ENCODE measurements at regions of chr12 and their contacts with region 1.

Region 1: DNA sequence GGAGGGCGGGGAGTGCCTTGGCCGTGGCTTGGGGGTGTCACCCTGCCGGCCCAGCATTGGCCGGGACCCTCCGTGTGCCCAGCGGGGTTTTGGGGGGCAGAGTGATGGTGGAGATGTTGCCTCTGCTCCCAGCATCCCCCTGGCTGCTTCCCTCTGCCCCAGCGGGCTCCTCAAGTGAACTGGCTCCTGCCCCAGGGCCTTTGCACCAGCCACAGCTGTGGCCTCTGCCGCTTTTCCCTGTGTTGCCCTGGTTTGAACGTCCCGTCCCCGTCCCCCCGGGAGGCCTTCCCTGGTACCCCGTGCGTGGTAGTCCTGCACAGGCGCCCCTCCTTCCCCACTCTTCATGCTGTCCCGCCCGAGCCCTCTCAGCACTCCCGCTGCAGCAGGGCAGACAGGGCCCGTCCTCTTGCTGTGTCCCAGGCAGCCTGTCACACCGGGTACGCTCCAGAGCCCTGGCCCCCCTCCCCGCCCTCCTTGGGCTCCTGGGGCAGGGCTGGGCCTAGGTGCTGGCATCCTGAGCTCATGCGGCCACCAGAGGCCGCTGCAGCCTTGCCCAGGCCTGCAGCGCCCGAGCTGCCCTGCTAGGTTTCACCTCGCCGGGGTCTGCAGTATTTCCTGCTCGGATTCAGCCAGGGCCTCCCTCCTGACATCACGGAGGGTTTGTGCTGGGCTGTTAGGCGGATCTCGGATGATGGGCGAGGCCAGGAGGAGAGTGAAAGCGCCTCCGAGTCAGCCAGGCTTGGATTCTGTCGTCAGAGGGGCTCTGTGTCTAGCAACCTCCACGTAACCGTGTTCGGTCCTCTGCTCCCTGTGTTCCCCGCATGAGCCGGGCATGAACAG is 9.5 kb downstream of the NOC4L start:
- DNase-seq: peak; percentile 51 to 88 (median 70)
- ATAC-seq: peak; percentile 90 to 94 (median 92)
- H3K4me3 ChIP-seq: peak overlapping the region in 1 of 2 donors; percentile 54
- H3K4me3 Mint-ChIP-seq: peak overlapping the region in 1 of 3 donors; percentile 25
- H3K27ac ChIP-seq: no peak overlapping the region
- H3K27ac Mint-ChIP-seq: peak overlapping the region in 1 of 2 donors; percentile 39
- H3K4me1 ChIP-seq: peaks cover 0 to 12% of the 10 kb centered on the region in 2 experiments
- H3K4me1 Mint-ChIP-seq: no peaks in the 10 kb centered on the region
- H3K27me3 ChIP-seq: peaks cover 0 to 2% of the 10 kb centered on the region in 2 experiments
- H3K27me3 Mint-ChIP-seq: no peaks in the 10 kb centered on the region

Region 2: GRCh38 chr12:132185705-132186104 is 32.0 kb after region 1 on chr12:
- CTCF ChIA-PET with region 1: interaction called, 7 to 12 read pairs
- POLR2A ChIA-PET with region 1: no interaction called
- DNase-seq: peak in 33 of 35 experiments; percentile 32 to 83 (median 54)
- ATAC-seq: peak; percentile 12 to 62 (median 24)
- H3K4me3 ChIP-seq: peak overlapping the region in 1 of 2 donors; percentile 41
- H3K4me3 Mint-ChIP-seq: peak overlapping the region; percentile 63 to 97 (median 78)
- H3K27ac ChIP-seq: peak overlapping the region; percentile 85
- H3K27ac Mint-ChIP-seq: peak overlapping the region; percentile 90
- H3K4me1 ChIP-seq: peaks cover 11 to 58% of the 10 kb centered on the region in 2 experiments
- H3K4me1 Mint-ChIP-seq: peaks cover 41 to 62% (median 59%) of the 10 kb centered on the region in 3 donors
- H3K27me3 ChIP-seq: no peaks in the 10 kb centered on the region
- H3K27me3 Mint-ChIP-seq: no peaks in the 10 kb centered on the region

Region 3: DNA sequence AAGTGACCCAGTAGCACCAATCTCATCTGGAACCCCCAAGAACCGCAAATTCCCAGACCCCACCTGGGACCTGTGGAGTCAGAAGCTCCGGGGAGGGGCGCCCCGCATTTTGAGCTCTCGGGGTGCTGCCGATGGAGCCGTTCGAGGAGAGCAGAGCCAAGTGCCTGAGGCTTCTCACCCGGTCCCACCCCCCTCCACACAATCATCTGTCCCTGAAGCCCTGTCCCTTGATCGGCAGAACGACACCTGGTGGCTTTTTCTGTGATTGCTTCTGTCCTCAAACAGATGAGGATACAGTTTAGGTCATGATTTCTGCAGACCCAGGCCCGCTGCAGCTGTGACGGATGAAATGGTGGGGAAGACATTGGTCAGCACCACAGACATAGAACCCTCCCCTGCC is 65.2 kb after region 1 on chr12:
- CTCF ChIA-PET with region 1: interaction called, 4 to 13 read pairs
- POLR2A ChIA-PET with region 1: no interaction called
- DNase-seq: peak in 34 of 35 experiments; percentile 13 to 75 (median 42)
- ATAC-seq: peak; percentile 36 to 62 (median 50)
- H3K4me3 ChIP-seq: no peak overlapping the region
- H3K4me3 Mint-ChIP-seq: no peak overlapping the region
- H3K27ac ChIP-seq: no peak overlapping the region
- H3K27ac Mint-ChIP-seq: no peak overlapping the region
- H3K4me1 ChIP-seq: peaks cover 0 to 16% of the 10 kb centered on the region in 2 experiments
- H3K4me1 Mint-ChIP-seq: peaks cover 10 to 26% (median 10%) of the 10 kb centered on the region in 3 donors
- H3K27me3 ChIP-seq: peaks cover 0 to 28% of the 10 kb centered on the region in 2 experiments
- H3K27me3 Mint-ChIP-seq: peaks cover 0 to 23% of the 10 kb centered on the region in 2 donors

Region 4: DNA sequence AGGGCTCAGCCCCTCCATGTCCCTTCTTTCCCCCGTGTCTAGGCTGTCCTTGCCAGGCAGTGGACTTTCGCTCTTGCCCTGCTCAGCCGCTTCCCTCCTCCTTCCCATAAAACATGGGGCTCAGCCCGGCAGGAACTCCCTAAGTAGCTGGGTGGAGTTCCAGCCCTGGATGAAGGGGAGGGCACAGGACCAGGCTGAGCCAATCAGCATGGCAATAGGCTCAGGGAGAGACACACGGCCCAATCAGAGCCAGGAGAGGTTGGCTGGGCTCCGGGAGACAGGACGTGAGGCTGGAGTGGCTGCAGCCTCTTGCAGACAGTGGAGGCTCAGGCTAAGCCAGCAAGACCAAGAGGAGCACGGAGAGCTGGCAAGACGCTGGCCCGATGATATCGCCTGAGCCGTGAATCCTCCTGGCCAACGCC is 121.4 kb after region 1 on chr12:
- CTCF ChIA-PET with region 1: no interaction called
- POLR2A ChIA-PET with region 1: no interaction called
- DNase-seq: no peak
- ATAC-seq: no peak
- H3K4me3 ChIP-seq: no peak overlapping the region
- H3K4me3 Mint-ChIP-seq: no peak overlapping the region
- H3K27ac ChIP-seq: no peak overlapping the region
- H3K27ac Mint-ChIP-seq: no peak overlapping the region
- H3K4me1 ChIP-seq: peaks cover 0 to 3% of the 10 kb centered on the region in 2 experiments
- H3K4me1 Mint-ChIP-seq: peaks cover 0 to 5% (median 0%) of the 10 kb centered on the region in 3 donors
- H3K27me3 ChIP-seq: peaks cover 2 to 62% of the 10 kb centered on the region in 2 experiments
- H3K27me3 Mint-ChIP-seq: peaks cover 16 to 41% of the 10 kb centered on the region in 2 donors